ENCODE measurements at regions of chr19 and their contacts with region 1.

Region 1: DNA sequence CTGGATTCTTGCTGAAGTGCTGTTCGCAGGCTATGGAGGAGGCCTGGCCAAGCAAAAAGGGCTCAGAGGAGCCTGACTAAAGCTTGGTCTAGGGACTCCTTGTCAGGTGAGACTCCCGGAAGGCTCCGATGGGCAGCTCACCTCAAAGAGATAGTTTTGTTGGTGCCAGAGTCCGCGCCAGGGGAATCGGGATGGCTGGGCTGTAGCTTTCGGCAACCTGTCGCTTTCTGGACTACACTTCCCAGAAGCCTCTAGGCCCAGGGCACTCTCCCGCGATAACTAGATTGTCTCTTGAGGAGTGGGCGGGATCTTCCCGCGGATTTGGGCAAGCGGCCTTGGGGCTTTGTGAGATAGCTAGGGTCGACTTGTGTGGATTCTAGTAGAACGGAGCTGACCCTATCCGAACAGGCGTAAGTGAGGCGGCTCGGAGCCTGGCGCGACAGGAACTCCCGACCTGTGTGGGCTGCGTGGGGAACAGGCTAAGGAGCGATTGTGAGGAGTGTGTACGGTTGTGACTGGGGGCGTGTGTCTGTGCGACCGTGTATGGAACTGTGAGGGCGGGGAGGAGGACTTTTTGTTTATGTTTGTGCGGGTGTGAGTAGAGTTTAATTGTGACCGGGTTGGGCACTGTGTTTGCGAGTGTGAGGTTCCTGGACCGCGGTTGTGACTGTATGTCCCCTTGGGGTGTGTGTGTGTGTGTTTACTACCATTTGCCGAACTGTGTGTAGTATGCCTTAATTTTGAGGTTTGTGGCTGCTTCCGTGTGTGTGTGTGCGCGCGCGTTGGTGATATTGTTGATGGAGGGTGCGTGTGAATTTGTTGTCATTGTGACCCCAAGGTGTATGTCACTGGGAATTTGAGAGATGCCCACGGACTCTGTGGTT is at the start of gene ZNF345:
- DNase-seq: peak; percentile 94
- ATAC-seq: peak; percentile 91
- H3K4me3 ChIP-seq: peak within 1 kb of the TSS; percentile 79
- H3K27ac ChIP-seq: peak within 1 kb of the TSS; percentile 83
- H3K4me1 ChIP-seq: 0 out of 2 replicates have a peak, but pooled peaks cover 2% of the 10 kb centered on the region
- H3K27me3 ChIP-seq: no peaks in the 10 kb centered on the region
- CTCF ChIP-seq: no peak
- POLR2A ChIP-seq: peak; percentile 45; the same call in 1 of the 2 replicates
- RAD21 ChIP-seq: no peak
- total RNA-seq, gene ZNF345: 2.5 and 3.0 TPM in 2 replicates

Region 2: DNA sequence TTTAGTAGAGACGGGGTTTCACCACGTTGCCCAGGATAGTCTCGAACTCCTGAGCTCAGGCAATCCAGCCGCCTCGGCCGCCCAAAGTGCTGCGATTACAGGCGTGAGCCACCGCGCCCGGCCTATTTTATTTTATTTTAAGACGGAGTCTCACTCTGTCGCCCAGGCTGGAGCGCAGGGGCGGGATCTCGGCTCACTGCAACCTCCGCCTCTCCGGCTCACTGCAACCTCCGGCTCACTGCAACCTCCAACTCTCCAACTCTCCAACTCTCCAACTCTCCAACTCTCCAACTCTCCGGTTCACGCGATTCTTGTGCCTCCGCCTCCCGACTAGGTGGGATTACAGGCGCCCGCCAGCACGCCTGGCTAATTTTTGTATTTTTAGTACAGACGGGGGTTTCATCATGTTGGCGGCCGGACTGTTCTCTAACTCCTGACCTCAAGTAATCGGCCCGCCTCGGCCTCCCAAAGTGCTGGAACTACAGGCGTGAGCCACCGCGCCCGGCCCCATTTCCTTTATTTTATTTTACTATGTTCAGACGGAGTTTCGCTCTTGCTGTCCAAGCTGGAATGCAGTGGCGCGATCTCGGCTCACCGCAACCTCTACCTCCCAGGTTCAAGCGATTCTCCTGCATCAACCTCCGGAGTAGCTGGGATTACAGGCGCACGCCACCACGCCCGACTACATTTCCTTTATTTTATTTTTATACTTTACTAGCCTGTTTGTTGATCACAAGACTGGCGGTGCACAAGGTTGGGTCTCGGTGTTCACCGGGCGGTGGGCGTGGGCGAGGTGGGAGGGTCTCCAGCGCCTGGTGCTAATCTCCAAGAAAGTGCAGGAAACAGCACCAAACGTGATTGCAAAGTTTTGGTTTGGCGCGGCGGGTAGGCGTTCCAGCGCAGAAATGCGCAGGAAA is 54.5 kb before region 1 on chr19:
- CTCF ChIA-PET with region 1: no interaction called
- POLR2A ChIA-PET with region 1: no interaction called
- dilution Hi-C with region 1: no loop called
- in situ Hi-C with region 1: no loop called
- intact Hi-C with region 1: loop called (anchors 1 kb)
- DNase-seq: no peak
- ATAC-seq: no peak
- H3K4me3 ChIP-seq: peak overlapping the region; percentile 97
- H3K27ac ChIP-seq: peak overlapping the region; percentile 5; the same call in 1 of the 2 replicates
- H3K4me1 ChIP-seq: no peaks in the 10 kb centered on the region
- H3K27me3 ChIP-seq: no peaks in the 10 kb centered on the region
- CTCF ChIP-seq: no peak
- POLR2A ChIP-seq: no peak
- RAD21 ChIP-seq: no peak

Region 3: DNA sequence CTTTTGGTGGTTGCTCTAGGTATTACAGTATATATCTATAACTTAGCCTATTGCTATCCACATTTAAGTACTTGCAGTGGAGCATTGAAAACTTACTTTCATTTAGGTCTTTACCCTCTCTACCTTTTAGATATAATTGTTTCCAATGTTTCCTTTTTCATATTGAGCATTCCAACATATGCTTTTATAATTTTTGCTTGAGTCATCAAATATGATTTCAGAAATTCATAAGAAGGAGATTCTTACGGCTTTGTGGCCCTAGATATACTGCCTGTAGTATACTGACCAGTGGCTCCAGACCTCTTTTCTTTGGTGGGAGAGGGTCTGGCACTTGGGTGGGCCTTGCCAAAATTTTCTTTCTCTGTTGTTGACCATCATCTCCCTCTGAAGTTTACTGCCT is 45.4 kb before region 1 on chr19:
- CTCF ChIA-PET with region 1: no interaction called
- POLR2A ChIA-PET with region 1: interaction called, 12 read pairs
- dilution Hi-C with region 1: no loop called
- in situ Hi-C with region 1: no loop called
- intact Hi-C with region 1: no loop called
- DNase-seq: no peak
- ATAC-seq: no peak
- H3K4me3 ChIP-seq: no peak overlapping the region
- H3K27ac ChIP-seq: no peak overlapping the region
- H3K4me1 ChIP-seq: no peaks in the 10 kb centered on the region
- H3K27me3 ChIP-seq: no peaks in the 10 kb centered on the region
- CTCF ChIP-seq: no peak
- POLR2A ChIP-seq: no peak
- RAD21 ChIP-seq: no peak

Region 4: GRCh38 chr19:36837906-36838783 is 12.7 kb before region 1 on chr19 and contains the start of gene ZNF790:
- CTCF ChIA-PET with region 1: no interaction called
- POLR2A ChIA-PET with region 1: interaction called, 5 read pairs
- dilution Hi-C with region 1: no loop called
- in situ Hi-C with region 1: no loop called
- intact Hi-C with region 1: loop called (anchors 1 kb)
- DNase-seq: peak; percentile 89
- ATAC-seq: peak; percentile 95
- H3K4me3 ChIP-seq: peak within 1 kb of the TSS; percentile 70
- H3K27ac ChIP-seq: peak within 1 kb of the TSS; percentile 95
- H3K4me1 ChIP-seq: 0 out of 2 replicates have a peak, but pooled peaks cover 1% of the 10 kb centered on the region
- H3K27me3 ChIP-seq: no peaks in the 10 kb centered on the region
- CTCF ChIP-seq: no peak
- POLR2A ChIP-seq: peak; percentile 48; the same call in 1 of the 2 replicates
- RAD21 ChIP-seq: no peak
- total RNA-seq, gene ZNF790: 4.3 and 6.4 TPM in 2 replicates

Region 5: DNA sequence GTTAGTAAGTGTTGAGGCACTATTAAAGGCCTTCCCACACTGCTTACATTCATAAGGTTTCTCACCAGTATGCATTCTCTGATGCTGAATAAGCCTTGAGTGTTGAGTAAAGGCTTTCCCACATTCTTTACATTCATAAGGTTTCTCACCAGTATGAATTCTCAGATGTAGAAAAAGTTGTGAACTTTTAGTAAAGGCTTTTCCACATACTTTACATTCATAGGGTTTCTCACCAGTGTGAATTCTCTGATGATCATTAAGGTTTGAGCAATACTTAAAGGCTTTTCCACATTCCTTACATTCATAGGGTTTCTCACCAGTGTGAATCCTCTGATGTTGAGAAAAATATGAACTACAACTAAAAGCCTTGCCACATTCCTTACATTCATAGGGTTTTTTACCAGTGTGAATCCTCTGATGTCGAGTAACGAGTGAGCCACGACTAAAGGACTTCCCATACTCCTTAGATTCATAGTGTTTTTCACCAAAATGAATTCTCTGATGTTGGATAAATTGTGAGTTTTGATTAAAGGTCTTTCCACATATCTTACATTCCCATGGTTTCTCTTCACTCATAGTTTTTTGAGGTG is 41.1 kb after region 1 on chr19:
- CTCF ChIA-PET with region 1: no interaction called
- POLR2A ChIA-PET with region 1: no interaction called
- dilution Hi-C with region 1: no loop called
- in situ Hi-C with region 1: no loop called
- intact Hi-C with region 1: no loop called
- DNase-seq: no peak
- ATAC-seq: no peak
- H3K4me3 ChIP-seq: no peak overlapping the region
- H3K27ac ChIP-seq: no peak overlapping the region
- H3K4me1 ChIP-seq: no peaks in the 10 kb centered on the region
- H3K27me3 ChIP-seq: no peaks in the 10 kb centered on the region
- CTCF ChIP-seq: no peak
- POLR2A ChIP-seq: no peak
- RAD21 ChIP-seq: no peak

Region 6: DNA sequence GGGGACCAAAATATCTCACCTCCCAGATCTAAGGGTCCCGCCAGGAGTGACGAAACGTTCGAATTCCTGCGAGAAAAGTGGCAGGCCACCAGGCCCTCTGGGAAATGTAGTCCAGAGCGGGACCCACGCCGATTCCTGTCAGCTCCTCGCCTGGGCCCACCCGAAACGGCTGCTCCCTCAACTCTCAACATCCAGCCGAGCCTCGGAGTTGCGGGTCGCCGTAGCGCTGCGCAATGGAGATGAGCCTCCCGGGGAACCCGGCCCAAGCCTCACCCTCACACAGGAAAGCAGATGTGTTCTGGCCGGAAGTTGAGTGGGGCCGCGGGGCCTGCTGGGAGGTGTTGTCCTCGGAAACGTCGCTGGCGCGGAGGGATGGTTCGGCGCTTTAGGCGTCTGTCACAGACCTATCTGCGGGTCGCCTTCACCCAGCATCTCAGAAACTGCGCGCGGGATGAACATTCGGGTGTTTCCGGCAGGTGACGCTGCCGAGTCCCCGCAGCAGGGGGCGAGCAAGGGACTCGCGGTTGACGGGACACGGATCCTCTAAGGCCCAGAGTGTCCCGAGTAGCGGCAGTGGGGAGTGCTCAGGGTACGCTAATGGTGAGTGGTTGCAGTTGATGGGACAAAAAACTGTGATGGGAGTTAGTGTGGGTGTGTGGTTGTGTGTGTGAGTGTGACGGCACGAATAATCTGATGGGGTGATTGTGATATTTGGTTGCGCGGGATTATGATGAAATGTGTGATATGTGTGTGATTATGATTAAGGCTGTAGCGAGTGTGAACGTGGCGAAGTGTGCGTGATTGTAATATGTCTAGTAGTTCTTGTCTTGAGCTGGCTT is 65.4 kb after region 1 on chr19 and contains the starts of genes ZNF568 and ZNF829:
- CTCF ChIA-PET with region 1: no interaction called
- POLR2A ChIA-PET with region 1: no interaction called
- dilution Hi-C with region 1: no loop called
- in situ Hi-C with region 1: no loop called
- intact Hi-C with region 1: loop called (anchors 5 kb)
- DNase-seq: peak; percentile 83
- ATAC-seq: peak; percentile 97
- H3K4me3 ChIP-seq: peak within 1 kb of the TSS; percentile 87
- H3K27ac ChIP-seq: peak within 1 kb of the TSS; percentile 98
- H3K4me1 ChIP-seq: no peaks in the 10 kb centered on the region
- H3K27me3 ChIP-seq: no peaks in the 10 kb centered on the region
- CTCF ChIP-seq: peak; percentile 63
- POLR2A ChIP-seq: 0 out of 2 replicates have a peak, but pooled peaks have one; percentile 18
- RAD21 ChIP-seq: peak; percentile 46; the same call in 1 of the 2 replicates
- total RNA-seq, gene ZNF568: 7.3 and 10.6 TPM in 2 replicates
- total RNA-seq, gene ZNF829: 3.0 and 3.3 TPM in 2 replicates

Region 7: GRCh38 chr19:36931684-36932083 is 80.9 kb after region 1 on chr19:
- CTCF ChIA-PET with region 1: no interaction called
- POLR2A ChIA-PET with region 1: no interaction called
- dilution Hi-C with region 1: no loop called
- in situ Hi-C with region 1: no loop called
- intact Hi-C with region 1: no loop called
- DNase-seq: no peak
- ATAC-seq: no peak
- H3K4me3 ChIP-seq: no peak overlapping the region
- H3K27ac ChIP-seq: no peak overlapping the region
- H3K4me1 ChIP-seq: no peaks in the 10 kb centered on the region
- H3K27me3 ChIP-seq: no peaks in the 10 kb centered on the region
- CTCF ChIP-seq: no peak
- POLR2A ChIP-seq: no peak
- RAD21 ChIP-seq: no peak

Region 8: GRCh38 chr19:37931881-37932655 is 1081.3 kb after region 1 on chr19:
- CTCF ChIA-PET with region 1: no interaction called
- POLR2A ChIA-PET with region 1: no interaction called
- dilution Hi-C with region 1: no loop called
- in situ Hi-C with region 1: no loop called
- intact Hi-C with region 1: no loop called
- DNase-seq: peak; percentile 78
- ATAC-seq: peak; percentile 84
- H3K4me3 ChIP-seq: no peak overlapping the region
- H3K27ac ChIP-seq: peak overlapping the region; percentile 50
- H3K4me1 ChIP-seq: peaks cover 11% of the 10 kb centered on the region
- H3K27me3 ChIP-seq: no peaks in the 10 kb centered on the region
- CTCF ChIP-seq: 0 out of 2 replicates have a peak, but pooled peaks have one; percentile 9
- POLR2A ChIP-seq: no peak; the same call in 1 of the 2 replicates
- RAD21 ChIP-seq: no peak; the same call in 1 of the 2 replicates

Measured in IMR-90 (cell line).